B cell (primary cell): ENCODE measurements at regions of chr2 and their contacts with region 1.

Region 1: DNA sequence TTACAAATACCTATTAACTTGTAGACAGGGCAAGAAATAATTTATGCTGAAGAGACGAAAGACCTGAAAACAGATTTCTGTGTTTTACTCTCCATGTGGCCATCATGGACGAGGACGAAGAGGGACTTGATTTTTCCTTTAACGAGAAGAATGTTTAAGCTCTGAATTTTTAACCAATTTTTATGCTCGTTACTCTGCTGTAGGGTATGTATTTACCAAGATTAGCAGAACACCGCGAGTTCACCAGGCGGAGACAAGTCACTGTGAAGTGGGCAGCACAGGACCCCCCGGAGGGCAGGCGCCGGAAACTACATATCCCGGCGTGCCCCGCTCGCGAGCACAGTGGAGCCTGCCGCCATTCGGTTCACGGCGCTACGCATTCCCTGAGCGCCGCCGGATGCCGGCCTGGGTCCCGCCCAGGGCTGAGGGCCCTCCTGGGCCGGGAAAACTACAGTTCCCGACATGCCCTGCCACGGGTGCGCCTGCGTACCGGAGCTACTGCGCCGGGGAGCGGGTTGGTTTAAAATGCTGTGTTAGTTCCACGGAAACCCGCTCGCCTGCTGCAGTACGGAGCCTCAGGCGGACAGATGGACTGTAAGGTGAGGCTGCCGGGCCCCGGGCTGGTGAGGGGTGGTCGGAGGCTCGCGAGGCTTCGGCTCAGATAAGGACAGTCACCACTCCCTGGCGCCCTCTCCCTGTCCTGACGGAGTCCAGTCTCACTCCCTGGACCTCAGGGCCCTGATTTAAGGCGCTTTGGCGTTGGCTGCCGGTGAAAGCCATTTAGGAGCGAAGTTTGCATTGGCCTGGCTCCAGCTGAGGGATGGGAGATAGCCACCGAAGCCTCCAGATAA is at the start of gene CCDC150:
- DNase-seq: peak; percentile 94
- ATAC-seq: peak; percentile 100
- H3K4me3 ChIP-seq: peak within 1 kb of the TSS; percentile 54 to 88 (median 68)
- H3K4me3 Mint-ChIP-seq: peak within 1 kb of the TSS; percentile 94
- H3K27ac ChIP-seq: peak within 1 kb of the TSS in 1 of 2 donors; percentile 56
- H3K27ac Mint-ChIP-seq: peak within 1 kb of the TSS; percentile 70
- H3K4me1 ChIP-seq: peaks cover 7 to 17% of the 10 kb centered on the region in 2 donors
- H3K4me1 Mint-ChIP-seq: peaks cover 21% of the 10 kb centered on the region
- H3K27me3 ChIP-seq: no peaks in the 10 kb centered on the region
- H3K27me3 Mint-ChIP-seq: peaks cover 8% of the 10 kb centered on the region
- CTCF ChIP-seq: no peak
- total RNA-seq, gene CCDC150: 4.9 and 5.0 TPM in 2 replicates

Region 2: DNA sequence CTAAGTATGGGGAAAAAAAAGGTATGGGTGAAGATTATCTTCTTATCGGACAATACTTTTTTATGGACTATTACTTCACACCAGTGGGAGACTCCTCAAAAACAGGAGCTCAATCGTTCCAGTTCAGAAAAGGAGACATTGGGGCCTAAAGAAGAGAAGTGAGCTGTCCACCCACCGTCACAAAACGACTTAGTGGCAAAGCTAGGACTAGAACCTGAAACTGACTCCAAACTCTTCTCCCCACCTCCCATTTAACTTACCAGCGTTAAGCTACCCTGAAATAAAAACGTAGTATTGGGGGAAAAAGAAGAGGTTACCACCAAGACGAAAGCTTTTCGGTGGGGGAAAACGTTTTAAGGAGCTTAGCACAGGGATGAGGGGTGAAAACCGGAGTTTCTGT is 159.6 kb after region 1 on chr2:
- CTCF ChIA-PET with region 1: no interaction called
- POLR2A ChIA-PET with region 1: no interaction called
- intact Hi-C with region 1: loop called (anchors 1 kb)
- DNase-seq: no peak
- ATAC-seq: no peak
- H3K4me3 ChIP-seq: peak overlapping the region; percentile 67 to 85 (median 79)
- H3K4me3 Mint-ChIP-seq: peak overlapping the region; percentile 96
- H3K27ac ChIP-seq: peak overlapping the region; percentile 61 to 87
- H3K27ac Mint-ChIP-seq: peak overlapping the region; percentile 92
- H3K4me1 ChIP-seq: peaks cover 5 to 8% of the 10 kb centered on the region in 2 donors
- H3K4me1 Mint-ChIP-seq: peaks cover 15% of the 10 kb centered on the region
- H3K27me3 ChIP-seq: peaks cover 0 to 10% (median 0%) of the 10 kb centered on the region in 4 experiments
- H3K27me3 Mint-ChIP-seq: peaks cover 12% of the 10 kb centered on the region
- CTCF ChIP-seq: no peak